Psoas muscle (tissue), 8 donors: ENCODE measurements at regions of chr6 and their contacts with region 1.

Region 1: DNA sequence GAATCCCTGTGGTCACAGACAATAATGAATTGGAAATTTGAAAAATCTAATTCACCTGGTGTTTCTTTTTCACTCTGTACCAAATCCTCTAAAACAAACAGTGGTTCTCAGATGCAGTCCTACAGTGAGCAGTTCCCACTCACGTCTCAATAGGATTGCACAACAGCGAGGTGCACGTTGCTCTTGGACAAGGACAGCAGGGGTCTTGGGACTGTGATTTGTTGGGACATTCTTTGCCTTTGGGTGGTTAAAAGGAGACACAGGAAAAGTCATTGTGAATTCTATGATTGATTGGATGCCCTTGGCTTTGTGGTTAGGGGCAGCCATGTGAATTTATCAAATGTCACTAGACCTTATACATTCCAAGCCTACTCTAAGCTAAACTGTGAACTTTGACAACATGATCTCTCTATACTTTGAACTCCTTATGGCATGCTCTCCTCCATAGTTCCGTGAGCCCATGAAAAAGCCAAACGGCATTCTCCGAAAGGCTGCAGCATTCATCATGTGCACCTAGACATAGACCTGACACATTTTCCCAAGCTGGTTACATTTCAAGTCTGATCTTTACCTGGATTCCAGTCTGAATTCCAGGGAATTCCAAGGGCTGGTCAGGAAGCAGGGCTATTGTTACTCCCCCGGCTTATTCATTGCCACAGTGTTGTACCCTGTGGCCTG is 647 bp downstream of the UNC93A start:
- DNase-seq: no peak
- ATAC-seq: no peak
- H3K4me3 ChIP-seq: no peak overlapping the region
- H3K27ac ChIP-seq: no peak overlapping the region
- H3K4me1 ChIP-seq: no peaks in the 10 kb centered on the region
- H3K27me3 ChIP-seq: peaks cover 0 to 8% (median 0%) of the 10 kb centered on the region in 3 donors
- CTCF ChIP-seq: no peak

Region 2: GRCh38 chr6:167219967-167220512 is 71.7 kb before region 1 on chr6:
- intact Hi-C with region 1: loop called in 1 of 2 experiments (anchors 5 kb)
- DNase-seq: no peak
- ATAC-seq: no peak
- H3K4me3 ChIP-seq: no peak overlapping the region
- H3K27ac ChIP-seq: no peak overlapping the region
- H3K4me1 ChIP-seq: no peaks in the 10 kb centered on the region
- H3K27me3 ChIP-seq: no peaks in the 10 kb centered on the region
- CTCF ChIP-seq: no peak

Region 3: GRCh38 chr6:167329014-167329413 is 37.3 kb after region 1 on chr6:
- intact Hi-C with region 1: no loop called
- DNase-seq: no peak
- ATAC-seq: no peak
- H3K4me3 ChIP-seq: no peak overlapping the region
- H3K27ac ChIP-seq: no peak overlapping the region
- H3K4me1 ChIP-seq: no peaks in the 10 kb centered on the region
- H3K27me3 ChIP-seq: peaks cover 0 to 3% (median 2%) of the 10 kb centered on the region in 3 donors
- CTCF ChIP-seq: no peak

Region 4: GRCh38 chr6:168157272-168158007 is 865.7 kb after region 1 on chr6:
- intact Hi-C with region 1: no loop called
- DNase-seq: no peak
- ATAC-seq: peak in 2 of 4 donors; percentile 30 to 41
- H3K4me3 ChIP-seq: no peak overlapping the region
- H3K27ac ChIP-seq: no peak overlapping the region
- H3K4me1 ChIP-seq: no peaks in the 10 kb centered on the region
- H3K27me3 ChIP-seq: peaks cover 0 to 19% (median 2%) of the 10 kb centered on the region in 3 donors
- CTCF ChIP-seq: no peak